Cardiac septum (tissue), 1 donor: ENCODE measurements at regions of chr9 and their contacts with region 1.

Region 1: DNA sequence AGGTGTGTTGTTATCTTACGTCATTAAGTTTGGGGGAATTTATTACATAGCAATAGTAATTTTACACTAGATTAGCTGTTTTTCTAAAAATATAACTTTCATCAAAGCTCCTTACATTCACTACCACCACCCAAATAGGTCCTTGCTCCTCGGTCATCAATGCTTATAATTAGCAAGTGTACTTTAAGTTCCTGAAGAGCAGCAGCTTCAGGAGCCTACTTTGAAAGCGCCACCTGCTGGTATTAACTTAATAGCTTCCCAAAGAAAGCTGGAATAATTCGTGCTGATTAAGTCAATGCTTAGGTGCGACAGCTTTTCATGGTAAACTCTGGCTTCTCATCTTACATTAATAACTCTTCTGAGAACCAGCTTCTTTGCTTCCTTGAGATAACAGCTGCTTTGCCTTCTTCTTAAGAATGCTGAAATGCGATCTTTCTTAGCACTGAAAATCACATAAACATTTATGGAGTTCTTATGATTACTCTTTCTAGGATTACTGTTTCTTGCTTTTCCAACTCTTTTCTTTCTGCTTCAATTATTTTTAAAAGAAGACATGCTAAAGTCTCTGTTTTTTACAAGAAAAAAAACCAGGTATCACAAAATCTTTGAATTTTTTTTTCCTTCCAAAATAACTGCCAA is 10.0 kb upstream of the C5 start:
- DNase-seq: no peak

Region 2: DNA sequence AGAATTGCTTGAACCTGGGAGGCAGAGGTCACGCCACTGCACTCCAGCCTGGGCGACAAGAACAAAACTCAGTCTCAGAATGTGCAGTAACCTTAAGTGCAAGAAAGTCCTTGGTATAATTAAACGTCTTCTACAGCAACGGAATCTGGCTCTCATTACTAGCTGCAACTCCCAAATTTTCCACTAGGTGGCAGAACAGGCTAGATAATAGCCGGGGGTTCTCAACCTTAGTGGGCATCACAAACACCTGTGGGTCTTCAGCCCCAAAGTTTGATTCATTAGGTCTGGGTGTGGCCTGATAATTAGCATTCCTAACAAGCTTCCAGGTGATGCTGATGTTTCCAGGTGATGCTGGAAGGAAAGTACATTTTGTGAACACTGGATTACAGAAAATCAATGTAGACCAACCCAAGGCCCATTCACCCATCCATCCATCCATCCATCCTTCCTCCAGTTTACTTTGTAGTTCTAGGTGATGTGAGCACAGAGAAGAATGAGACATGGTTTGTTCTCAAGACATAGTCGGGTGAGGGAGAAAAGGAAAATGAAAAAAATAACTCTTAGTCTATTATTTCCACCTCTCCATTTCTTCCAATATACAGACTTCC is 304.2 kb before region 1 on chr9:
- intact Hi-C with region 1: loop called (anchors 5 kb)
- DNase-seq: no peak

Region 3: DNA sequence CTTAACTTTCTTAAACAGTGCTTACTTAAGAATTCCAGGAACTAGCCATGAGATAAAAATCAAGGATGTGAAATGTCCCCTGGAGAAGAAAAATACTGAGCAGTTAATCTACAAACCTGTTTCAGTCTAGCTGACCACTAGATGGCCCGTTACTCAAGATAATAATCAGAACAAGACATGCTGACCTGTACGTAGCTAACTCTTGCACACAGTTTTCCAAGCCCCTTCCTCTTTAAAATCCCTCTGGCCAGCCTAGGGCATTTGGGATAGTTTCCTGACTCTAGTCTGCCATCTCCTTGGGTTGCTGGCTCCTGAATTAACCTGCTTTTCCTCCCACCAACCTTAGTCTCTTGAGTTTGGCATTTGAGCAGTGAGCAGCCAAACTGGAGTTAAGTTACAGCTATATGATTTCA is 74.3 kb before region 1 on chr9:
- intact Hi-C with region 1: loop called (anchors 5 kb)
- DNase-seq: no peak

Region 4: DNA sequence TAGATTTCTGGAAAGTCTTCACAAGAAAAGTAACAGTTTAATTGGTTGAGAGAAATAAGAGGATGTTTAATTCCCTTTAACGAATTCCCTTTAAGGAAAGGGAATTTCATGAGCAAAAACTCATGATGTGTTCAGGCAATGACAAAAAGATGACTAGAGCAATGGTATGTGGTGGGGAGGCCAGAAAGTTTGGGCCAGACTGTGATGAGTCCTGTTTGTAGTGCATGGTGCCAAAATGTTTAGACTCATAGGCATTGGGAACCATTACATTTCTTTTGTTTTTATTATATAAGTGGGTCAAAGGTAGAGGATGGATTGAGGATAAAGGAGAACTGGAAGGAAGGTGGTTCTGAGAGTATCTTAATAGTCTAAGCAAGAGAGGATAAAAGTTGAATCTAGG is 25.5 kb after region 1 on chr9:
- intact Hi-C with region 1: no loop called
- DNase-seq: no peak